ENCODE measurements at regions of chr3 and their contacts with region 1.

Region 1: GRCh38 chr3:161220850-161221753 is at the start of gene NMD3:
- DNase-seq: peak; percentile 97
- ATAC-seq: peak; percentile 98
- total RNA-seq, gene NMD3: 49.0 TPM

Region 2: GRCh38 chr3:161081633-161082032 is 139.5 kb before region 1 on chr3:
- intact Hi-C with region 1: loop called (anchors 5 kb)
- DNase-seq: no peak
- ATAC-seq: no peak

Region 3: GRCh38 chr3:161104561-161105551 is 116.2 kb before region 1 on chr3 and contains the start of gene B3GALNT1:
- intact Hi-C with region 1: loop called (anchors 5 kb)
- DNase-seq: peak; percentile 75
- ATAC-seq: peak; percentile 75
- total RNA-seq, gene B3GALNT1: 51.8 TPM